Right cardiac atrium (tissue), 5 donors: ENCODE measurements at regions of chr19 and their contacts with region 1.

Region 1: GRCh38 chr19:38224014-38224862 is at the start of gene DPF1:
- DNase-seq: peak; percentile 52 to 80 (median 76)
- ATAC-seq: peak; percentile 77 to 78
- H3K4me3 ChIP-seq: peak within 1 kb of the TSS; percentile 45
- H3K27ac ChIP-seq: no peak within 1 kb of the TSS
- H3K4me1 ChIP-seq: no peaks in the 10 kb centered on the region
- H3K27me3 ChIP-seq: no peaks in the 10 kb centered on the region
- total RNA-seq, gene DPF1: 0.36 TPM in 1 of 4 donors, not detected in the others

Region 2: GRCh38 chr19:38079926-38080380 is 144.3 kb before region 1 on chr19:
- intact Hi-C with region 1: no loop called
- DNase-seq: no peak
- ATAC-seq: no peak
- H3K4me3 ChIP-seq: no peak overlapping the region
- H3K27ac ChIP-seq: no peak overlapping the region
- H3K4me1 ChIP-seq: no peaks in the 10 kb centered on the region
- H3K27me3 ChIP-seq: no peaks in the 10 kb centered on the region

Region 3: DNA sequence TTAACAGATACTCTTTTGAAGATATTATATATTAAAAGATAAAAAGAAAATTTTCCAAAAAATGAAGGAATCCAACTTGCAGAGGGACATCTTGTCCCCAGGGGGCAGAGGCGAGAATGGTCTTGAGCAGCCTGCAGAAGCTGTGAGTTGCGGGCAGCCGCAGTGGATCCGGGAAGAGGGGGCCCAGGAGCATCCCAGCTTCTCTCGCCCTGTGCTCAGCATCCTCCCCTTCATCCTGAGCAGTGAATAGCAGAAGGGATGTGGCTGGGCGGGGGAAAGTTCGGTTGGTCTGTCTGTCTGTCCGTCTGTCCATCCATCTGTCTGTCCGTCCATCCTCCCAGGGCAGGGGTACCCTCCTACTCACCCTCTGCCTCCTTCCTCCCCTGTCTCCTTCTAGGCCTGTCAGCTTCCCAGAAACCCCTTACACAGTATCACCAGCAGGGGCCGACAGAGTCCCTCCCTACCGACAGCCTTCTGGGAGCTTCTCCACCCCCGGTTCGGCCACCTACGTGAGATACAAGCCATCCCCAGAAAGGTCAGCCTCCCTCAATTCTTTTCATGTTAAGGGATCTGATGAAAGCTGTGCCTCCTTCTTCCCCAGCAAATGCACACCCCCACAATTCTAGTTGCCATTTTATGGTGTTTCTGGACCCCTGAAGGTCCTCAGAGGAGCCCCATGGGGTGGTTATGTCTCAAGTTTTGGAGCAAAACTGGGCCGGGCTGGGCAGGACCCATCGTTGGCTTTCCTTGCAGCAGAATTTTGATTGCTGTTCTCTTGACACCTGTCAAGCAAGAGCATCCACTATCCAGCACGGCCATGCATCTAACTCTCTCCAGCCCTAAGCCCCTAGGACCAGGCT is 81.8 kb before region 1 on chr19:
- intact Hi-C with region 1: loop called in 1 of 4 experiments (anchors 10 kb)
- DNase-seq: peak; percentile 57 to 83 (median 78)
- ATAC-seq: peak; percentile 58 to 75
- H3K4me3 ChIP-seq: no peak overlapping the region
- H3K27ac ChIP-seq: no peak overlapping the region
- H3K4me1 ChIP-seq: no peaks in the 10 kb centered on the region
- H3K27me3 ChIP-seq: no peaks in the 10 kb centered on the region

Region 4: GRCh38 chr19:38152461-38153379 is 71.5 kb before region 1 on chr19:
- intact Hi-C with region 1: loop called in 2 of 4 experiments (anchors 5 to 10 kb)
- DNase-seq: no peak
- ATAC-seq: no peak
- H3K4me3 ChIP-seq: no peak overlapping the region
- H3K27ac ChIP-seq: no peak overlapping the region
- H3K4me1 ChIP-seq: no peaks in the 10 kb centered on the region
- H3K27me3 ChIP-seq: no peaks in the 10 kb centered on the region